ENCODE measurements at regions of chr17 and their contacts with region 1.

Region 1: GRCh38 chr17:35312790-35313711 is 60.4 kb downstream of the SLFN11 start:
- DNase-seq: peak; percentile 83 to 97 (median 95)
- H3K4me3 ChIP-seq: peak overlapping the region; percentile 83
- H3K4me3 Mint-ChIP-seq: peak overlapping the region; percentile 92 to 100 (median 98)
- H3K27ac ChIP-seq: peak overlapping the region; percentile 87
- H3K27ac Mint-ChIP-seq: peak overlapping the region; percentile 90 to 99 (median 98)
- H3K4me1 ChIP-seq: peaks cover 25% of the 10 kb centered on the region
- H3K4me1 Mint-ChIP-seq: peaks cover 49 to 71% (median 58%) of the 10 kb centered on the region in 3 donors
- H3K27me3 ChIP-seq: no peaks in the 10 kb centered on the region
- H3K27me3 Mint-ChIP-seq: no peaks in the 10 kb centered on the region

Region 2: DNA sequence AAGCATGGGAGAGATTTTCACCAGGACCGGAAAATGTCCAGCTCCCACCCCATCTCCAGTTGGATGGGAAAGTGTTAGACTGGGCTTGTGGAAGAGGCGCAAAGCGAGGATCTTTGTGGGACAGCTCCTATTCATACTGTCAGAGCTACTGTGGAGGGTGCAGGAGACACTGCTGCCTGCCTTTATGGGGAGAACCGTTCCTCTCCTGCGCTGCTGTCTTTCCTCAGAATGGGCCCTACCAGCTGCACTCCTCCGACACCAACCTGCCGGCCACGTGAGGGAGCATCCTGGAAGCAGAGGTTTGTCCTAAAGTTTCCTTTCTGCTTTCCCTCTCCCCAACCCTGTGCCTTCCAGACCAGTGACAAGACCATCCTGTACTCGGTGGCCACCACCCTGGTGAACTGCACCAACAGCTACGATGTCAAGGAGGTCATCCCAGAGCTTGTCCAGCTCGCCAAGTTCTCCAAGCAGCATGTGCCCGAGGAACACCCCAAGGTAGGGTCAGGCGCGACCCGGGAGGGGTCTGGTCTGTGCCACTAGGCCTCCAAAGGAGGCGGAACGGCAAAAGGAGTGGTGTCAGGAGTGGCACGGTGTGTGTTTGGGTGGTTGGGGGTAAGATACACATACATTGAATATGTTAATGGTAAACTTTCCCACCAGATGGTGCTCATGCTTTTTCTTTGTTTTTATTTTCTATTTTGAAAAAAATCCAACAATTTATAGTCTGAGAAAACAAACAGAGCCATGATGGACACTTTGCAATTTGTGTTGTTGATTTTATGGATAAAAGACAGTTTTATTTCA is 141.9 kb before region 1 on chr17:
- CTCF ChIA-PET with region 1: interaction called, 20 read pairs
- POLR2A ChIA-PET with region 1: no interaction called
- DNase-seq: peak in 3 of 5 donors; percentile 63 to 70 (median 65)
- H3K4me3 ChIP-seq: no peak overlapping the region
- H3K4me3 Mint-ChIP-seq: peak overlapping the region; percentile 22 to 77 (median 74)
- H3K27ac ChIP-seq: no peak overlapping the region
- H3K27ac Mint-ChIP-seq: peak overlapping the region; percentile 63 to 96 (median 88)
- H3K4me1 ChIP-seq: peaks cover 39% of the 10 kb centered on the region
- H3K4me1 Mint-ChIP-seq: peaks cover 41 to 51% (median 47%) of the 10 kb centered on the region in 3 donors
- H3K27me3 ChIP-seq: no peaks in the 10 kb centered on the region
- H3K27me3 Mint-ChIP-seq: no peaks in the 10 kb centered on the region

Region 3: GRCh38 chr17:35373534-35373983 is 60.5 kb after region 1 on chr17 and contains the start of gene SLFN11:
- CTCF ChIA-PET with region 1: interaction called, 13 read pairs
- POLR2A ChIA-PET with region 1: interaction called, 12 read pairs
- DNase-seq: peak; percentile 82 to 92 (median 85)
- H3K4me3 ChIP-seq: peak within 1 kb of the TSS; percentile 97
- H3K4me3 Mint-ChIP-seq: peak within 1 kb of the TSS; percentile 96 to 100 (median 99)
- H3K27ac ChIP-seq: peak within 1 kb of the TSS; percentile 87
- H3K27ac Mint-ChIP-seq: peak within 1 kb of the TSS; percentile 98 to 100 (median 100)
- H3K4me1 ChIP-seq: peaks cover 8% of the 10 kb centered on the region
- H3K4me1 Mint-ChIP-seq: peaks cover 56 to 65% (median 59%) of the 10 kb centered on the region in 3 donors
- H3K27me3 ChIP-seq: no peaks in the 10 kb centered on the region
- H3K27me3 Mint-ChIP-seq: peaks cover 0 to 1% of the 10 kb centered on the region in 2 donors
- total RNA-seq, gene SLFN11: 39.5 to 48.4 TPM

Region 4: GRCh38 chr17:35521150-35521549 is 208.1 kb after region 1 on chr17:
- CTCF ChIA-PET with region 1: interaction called, 13 read pairs
- POLR2A ChIA-PET with region 1: interaction called, 3 read pairs
- DNase-seq: no peak
- H3K4me3 ChIP-seq: peak overlapping the region; percentile 34
- H3K4me3 Mint-ChIP-seq: peak overlapping the region; percentile 63 to 92 (median 84)
- H3K27ac ChIP-seq: no peak overlapping the region
- H3K27ac Mint-ChIP-seq: peak overlapping the region; percentile 86 to 98 (median 95)
- H3K4me1 ChIP-seq: peaks cover 64% of the 10 kb centered on the region
- H3K4me1 Mint-ChIP-seq: peaks cover 96 to 100% (median 98%) of the 10 kb centered on the region in 3 donors
- H3K27me3 ChIP-seq: no peaks in the 10 kb centered on the region
- H3K27me3 Mint-ChIP-seq: no peaks in the 10 kb centered on the region

Region 5: DNA sequence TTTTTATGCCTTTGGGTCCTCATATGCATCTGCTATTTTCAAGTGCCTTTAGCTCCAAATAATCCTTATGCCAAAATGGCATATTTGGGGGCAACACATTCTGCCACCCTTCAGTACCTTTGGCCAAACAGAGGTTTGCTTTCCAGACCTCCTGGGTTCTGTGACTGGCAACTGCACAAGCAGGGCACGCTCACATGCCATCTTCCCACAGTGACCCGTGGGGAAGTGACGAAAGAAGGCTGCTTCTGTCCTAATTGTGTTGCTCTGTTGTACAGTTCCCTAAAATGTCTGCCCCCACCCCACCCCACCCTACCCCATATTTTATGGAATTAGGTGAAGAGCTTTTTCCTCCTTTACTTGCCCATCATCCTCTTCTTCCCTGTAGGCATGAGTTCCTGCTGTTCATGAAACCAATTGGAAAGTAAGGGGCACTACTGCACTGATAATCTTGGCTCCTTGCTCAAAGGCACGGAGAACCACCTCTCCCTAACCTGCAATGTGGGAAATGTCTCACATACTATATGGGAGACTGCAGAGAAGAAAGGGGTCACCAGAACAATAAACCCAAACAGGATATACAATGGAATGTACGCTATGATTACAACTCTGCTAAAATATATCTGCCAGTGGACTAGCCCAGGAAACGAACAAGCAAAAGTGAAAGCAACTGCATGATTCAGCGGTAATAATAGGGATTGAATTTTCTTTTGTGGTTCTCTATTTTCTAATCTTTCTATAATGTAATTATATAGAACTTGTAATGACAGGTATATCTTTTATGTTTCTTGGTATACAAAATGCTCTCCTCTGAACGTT is 227.7 kb after region 1 on chr17:
- CTCF ChIA-PET with region 1: interaction called, 167 read pairs
- POLR2A ChIA-PET with region 1: interaction called, 22 read pairs
- DNase-seq: peak in 4 of 5 donors; percentile 23 to 58 (median 43)
- H3K4me3 ChIP-seq: peak overlapping the region; percentile 71
- H3K4me3 Mint-ChIP-seq: peak overlapping the region; percentile 85 to 95 (median 91)
- H3K27ac ChIP-seq: peak overlapping the region; percentile 74
- H3K27ac Mint-ChIP-seq: peak overlapping the region; percentile 91 to 100 (median 97)
- H3K4me1 ChIP-seq: peaks cover 37% of the 10 kb centered on the region
- H3K4me1 Mint-ChIP-seq: peaks cover 43 to 57% (median 51%) of the 10 kb centered on the region in 3 donors
- H3K27me3 ChIP-seq: no peaks in the 10 kb centered on the region
- H3K27me3 Mint-ChIP-seq: no peaks in the 10 kb centered on the region

Measured in CD8-positive, alpha-beta memory T cell (primary cell).